Prostate gland (tissue), 2 donors: ENCODE measurements at regions of chr2 and their contacts with region 1.

Region 1: DNA sequence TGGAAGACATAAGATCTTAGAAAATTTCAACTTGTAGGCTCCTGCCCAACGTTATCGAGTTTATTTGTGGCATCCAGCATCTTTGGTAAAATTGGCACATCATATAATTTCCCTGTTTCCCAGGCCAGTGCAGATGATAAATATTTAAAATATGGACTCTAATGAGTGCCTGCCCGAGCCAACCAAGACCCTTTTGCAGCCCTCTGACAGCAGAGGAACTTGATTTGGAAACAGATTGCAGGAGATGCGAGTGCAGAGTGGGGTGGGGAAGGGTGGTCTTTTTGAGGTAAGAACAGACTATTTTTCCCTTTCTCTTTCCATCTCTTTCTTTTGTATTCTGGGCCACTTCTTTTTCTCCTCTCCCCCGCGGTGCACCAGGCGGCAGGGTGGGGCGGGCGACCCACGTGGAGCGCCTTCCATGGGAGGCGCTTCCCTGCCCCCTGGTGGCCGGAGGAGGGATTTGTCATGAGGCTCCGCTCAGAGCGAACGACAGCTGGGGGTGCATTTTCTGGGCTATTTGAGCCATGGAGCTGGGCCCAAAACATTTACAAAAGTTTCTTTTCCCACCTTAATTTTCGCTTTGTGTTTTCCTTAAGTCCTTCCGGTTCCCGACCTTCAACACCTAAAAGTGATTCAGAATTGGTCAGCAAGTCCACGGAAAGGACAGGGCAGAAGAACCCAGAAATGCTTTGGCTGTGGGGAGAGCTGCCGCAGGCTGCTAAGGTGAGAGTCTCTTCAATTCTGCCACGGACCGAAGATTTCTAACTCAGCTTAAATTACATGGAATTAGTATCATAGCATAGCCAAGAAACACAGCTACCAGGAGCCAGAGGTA is 32.7 kb downstream of the LPIN1 start:
- DNase-seq: peak; percentile 57
- H3K4me3 ChIP-seq: no peak overlapping the region
- H3K27ac ChIP-seq: no peak overlapping the region
- H3K4me1 ChIP-seq: no peaks in the 10 kb centered on the region
- H3K27me3 ChIP-seq: no peaks in the 10 kb centered on the region
- CTCF ChIP-seq: peak; percentile 94 to 96 (median 96)
- POLR2A ChIP-seq: no peak

Region 2: DNA sequence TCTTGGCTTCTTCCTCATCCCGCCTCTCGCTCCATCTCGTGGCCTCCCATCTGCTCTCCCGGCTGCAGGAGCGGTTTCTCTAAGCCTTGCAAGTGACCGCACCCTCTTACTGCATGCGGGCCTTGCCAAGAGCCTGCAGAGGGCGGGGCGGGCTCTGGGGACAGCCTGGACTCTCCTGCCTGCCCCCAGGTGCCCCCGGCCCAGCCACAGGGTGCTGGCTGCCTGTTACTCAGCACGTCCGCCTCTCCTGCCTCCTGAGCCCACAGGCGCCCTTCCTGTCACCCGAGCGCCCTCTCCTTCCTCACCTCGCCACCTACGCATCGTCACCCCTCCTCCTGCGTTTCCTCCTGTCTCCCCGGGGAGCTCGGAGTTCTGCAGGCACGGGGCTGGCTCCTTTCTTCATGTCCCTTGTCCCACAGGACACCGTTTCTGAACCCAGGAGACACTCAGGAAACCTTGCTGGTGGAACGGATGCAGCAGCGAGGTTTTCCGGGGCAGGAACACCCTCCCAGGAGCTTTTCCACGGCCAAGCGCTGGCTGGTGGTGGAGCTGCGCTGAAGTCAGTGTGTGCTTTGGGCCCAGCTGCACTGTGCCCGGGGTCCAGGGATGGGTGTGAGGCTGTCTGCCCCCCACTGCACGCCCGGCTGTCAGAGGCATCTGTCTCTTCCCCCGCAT is 1448.0 kb before region 1 on chr2:
- intact Hi-C with region 1: no loop called
- DNase-seq: no peak
- H3K4me3 ChIP-seq: no peak overlapping the region
- H3K27ac ChIP-seq: no peak overlapping the region
- H3K4me1 ChIP-seq: no peaks in the 10 kb centered on the region
- H3K27me3 ChIP-seq: no peaks in the 10 kb centered on the region
- CTCF ChIP-seq: no peak
- POLR2A ChIP-seq: no peak

Region 3: GRCh38 chr2:11688222-11689069 is 90.7 kb before region 1 on chr2:
- intact Hi-C with region 1: loop called (anchors 2 kb)
- DNase-seq: peak; percentile 65
- H3K4me3 ChIP-seq: no peak overlapping the region
- H3K27ac ChIP-seq: no peak overlapping the region
- H3K4me1 ChIP-seq: no peaks in the 10 kb centered on the region
- H3K27me3 ChIP-seq: no peaks in the 10 kb centered on the region
- CTCF ChIP-seq: peak; percentile 52 to 76 (median 72)
- POLR2A ChIP-seq: no peak

Region 4: DNA sequence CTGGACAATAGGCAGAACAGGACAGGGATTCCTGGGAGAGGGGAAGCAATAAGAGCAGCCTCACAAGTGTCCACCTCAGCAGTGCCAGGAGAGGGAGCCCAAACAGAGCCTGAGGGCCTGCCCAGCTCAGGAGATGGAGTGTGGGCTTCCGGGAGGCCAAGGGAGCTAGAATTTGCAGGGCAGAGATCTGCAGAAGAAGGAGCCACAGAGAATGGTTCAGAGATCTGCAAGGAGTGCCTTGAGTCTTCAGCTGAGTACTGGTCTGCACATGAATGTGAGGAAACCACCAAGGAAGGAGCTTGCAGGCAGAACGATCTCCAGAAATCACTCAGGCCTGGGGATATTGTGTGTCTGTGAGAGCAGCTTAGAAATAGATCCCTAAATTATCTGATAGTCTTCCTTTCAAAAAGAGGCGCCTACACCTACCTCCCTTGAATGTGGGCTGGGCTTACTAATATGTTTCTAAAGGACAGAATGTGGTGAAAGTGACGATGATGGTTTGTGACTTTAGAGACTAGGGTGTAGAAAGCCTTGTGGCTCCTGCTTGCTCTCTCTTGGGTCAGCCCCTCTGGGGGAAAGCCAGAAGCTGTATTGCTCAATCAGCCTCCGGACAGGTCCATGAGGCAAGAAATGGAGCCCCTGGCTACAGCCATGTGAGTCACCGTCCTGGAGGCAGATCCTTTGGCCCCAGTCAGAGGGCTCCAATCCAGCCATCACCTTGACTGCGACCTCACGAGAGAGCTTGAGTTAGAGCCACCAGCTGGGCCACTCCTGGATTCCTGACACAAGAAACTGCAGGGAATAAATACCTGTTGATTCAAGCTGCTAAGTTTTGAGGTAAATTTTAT is 40.3 kb before region 1 on chr2:
- intact Hi-C with region 1: loop called (anchors 1 kb)
- DNase-seq: no peak
- H3K4me3 ChIP-seq: no peak overlapping the region
- H3K27ac ChIP-seq: no peak overlapping the region
- H3K4me1 ChIP-seq: no peaks in the 10 kb centered on the region
- H3K27me3 ChIP-seq: no peaks in the 10 kb centered on the region
- CTCF ChIP-seq: peak in 2 of 4 experiments; percentile 43 to 50
- POLR2A ChIP-seq: no peak